Common myeloid progenitor, CD34-positive (primary cell): ENCODE measurements at regions of chr12 and their contacts with region 1.

Region 1: GRCh38 chr12:107992870-107993451 is 136.1 kb upstream of the WSCD2 start:
- DNase-seq: peak; percentile 41 to 70 (median 65)
- H3K4me3 ChIP-seq: no peak overlapping the region
- H3K27ac ChIP-seq: no peak overlapping the region
- H3K4me1 ChIP-seq: no peaks in the 10 kb centered on the region
- H3K27me3 ChIP-seq: peaks cover 0 to 17% (median 2%) of the 10 kb centered on the region in 5 experiments

Region 2: GRCh38 chr12:107978201-107978600 is 14.8 kb before region 1 on chr12:
- CTCF ChIA-PET with region 1: interaction called, 13 read pairs
- POLR2A ChIA-PET with region 1: no interaction called
- DNase-seq: no peak
- H3K4me3 ChIP-seq: no peak overlapping the region
- H3K27ac ChIP-seq: no peak overlapping the region
- H3K4me1 ChIP-seq: no peaks in the 10 kb centered on the region
- H3K27me3 ChIP-seq: peaks cover 0 to 23% (median 4%) of the 10 kb centered on the region in 5 experiments

Region 3: DNA sequence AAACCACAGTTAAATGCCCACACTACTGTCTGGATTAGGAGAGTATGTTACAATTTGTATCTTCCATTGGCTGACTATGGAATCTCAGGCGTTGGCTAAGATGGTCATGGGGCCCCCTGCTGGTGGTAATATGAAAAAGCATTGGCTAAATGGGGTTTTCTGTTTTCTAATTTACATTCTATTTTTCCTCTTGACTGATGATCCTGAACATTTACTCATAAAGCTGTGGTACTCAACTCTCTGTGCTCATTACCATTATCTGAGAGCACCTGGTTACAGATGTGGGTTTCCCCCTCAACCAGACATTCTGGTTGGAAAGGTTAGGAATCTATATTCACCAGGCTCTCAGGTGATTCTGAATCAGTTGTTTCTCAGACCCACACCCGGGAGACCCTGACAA is 201.0 kb after region 1 on chr12:
- CTCF ChIA-PET with region 1: interaction called, 25 read pairs
- POLR2A ChIA-PET with region 1: no interaction called
- DNase-seq: peak; percentile 29 to 56 (median 51)
- H3K4me3 ChIP-seq: no peak overlapping the region
- H3K27ac ChIP-seq: no peak overlapping the region
- H3K4me1 ChIP-seq: no peaks in the 10 kb centered on the region
- H3K27me3 ChIP-seq: peaks cover 0 to 20% (median 2%) of the 10 kb centered on the region in 5 experiments

Region 4: GRCh38 chr12:108511633-108512540 is 518.9 kb after region 1 on chr12:
- CTCF ChIA-PET with region 1: interaction called, 29 read pairs
- POLR2A ChIA-PET with region 1: no interaction called
- DNase-seq: peak; percentile 78 to 88 (median 83)
- H3K4me3 ChIP-seq: peak overlapping the region in 2 of 7 experiments; percentile 8 to 12
- H3K27ac ChIP-seq: no peak overlapping the region
- H3K4me1 ChIP-seq: peaks cover 0 to 18% (median 16%) of the 10 kb centered on the region in 4 experiments
- H3K27me3 ChIP-seq: peaks cover 0 to 3% (median 0%) of the 10 kb centered on the region in 5 experiments